ENCODE measurements at regions of chr12 and their contacts with region 1.

Region 1: GRCh38 chr12:8890313-8891085 is 23.8 kb upstream of the PHC1 start:
- DNase-seq: peak; percentile 70
- CTCF ChIP-seq: peak; percentile 64

Region 2: DNA sequence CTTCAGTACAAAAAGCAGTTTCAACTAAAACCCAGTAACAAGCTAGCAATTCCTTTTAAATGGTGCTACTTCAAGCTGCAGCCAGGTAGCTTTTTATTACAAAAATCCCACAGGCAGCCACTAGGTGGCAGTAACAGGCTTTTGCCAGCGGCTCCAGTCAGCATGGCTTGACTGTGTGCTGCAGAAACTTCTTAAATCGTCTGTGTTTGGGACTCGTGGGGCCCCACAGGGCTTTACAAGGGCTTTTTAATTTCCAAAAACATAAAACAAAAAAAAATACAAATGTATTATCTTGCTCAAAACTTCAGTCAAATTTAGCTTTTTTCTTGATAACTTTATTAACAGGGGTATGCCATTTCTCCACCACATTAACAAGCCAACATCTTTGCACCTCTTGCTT is 346.2 kb before region 1 on chr12:
- in situ Hi-C with region 1: loop called (anchors 25 kb)
- DNase-seq: peak; percentile 69
- CTCF ChIP-seq: peak; percentile 77

Region 3: DNA sequence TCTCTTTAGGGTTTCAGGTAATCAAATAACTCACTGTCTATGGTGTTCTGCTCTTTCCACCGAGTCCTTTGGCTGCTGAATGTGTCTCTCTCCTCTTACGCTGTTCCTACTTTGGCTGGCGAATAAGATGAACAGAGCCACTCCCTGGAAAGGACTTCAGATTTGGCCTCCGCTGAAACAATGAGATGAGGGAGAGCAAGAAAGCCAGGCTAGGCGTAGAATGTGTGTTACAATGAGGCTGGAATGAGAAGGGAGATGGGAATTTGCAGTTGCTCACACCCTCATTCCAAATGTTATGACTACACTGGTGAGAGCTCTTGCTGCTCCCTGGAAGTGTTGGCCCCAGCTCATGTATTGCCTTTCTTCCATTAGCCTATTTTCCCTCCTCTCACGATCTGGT is 227.9 kb before region 1 on chr12 and contains the start of gene MFAP5:
- in situ Hi-C with region 1: loop called (anchors 10 kb)
- DNase-seq: no peak
- CTCF ChIP-seq: no peak